Activated T-helper 1 cell treated with anti-CD3 and anti-CD28 coated beads, Interleukin-12 subunit alpha, Interleukin-12 subunit beta, Interleukin-2, Interleukin-4 antibody, amounts not matched to agents 30 ng/mL and 10 ng/mL and 1 ng/mL, durations not matched to agents 14 hours and 24 hours and 36 hours (primary cell): ENCODE measurements at regions of chr10 and their contacts with region 1.

Region 1: GRCh38 chr10:100286051-100287033 is at the start of gene BLOC1S2:
- DNase-seq: peak; percentile 91
- H3K4me3 Mint-ChIP-seq: peak within 1 kb of the TSS; percentile 99
- H3K27ac Mint-ChIP-seq: peak within 1 kb of the TSS; percentile 99
- H3K4me1 Mint-ChIP-seq: peaks cover 28% of the 10 kb centered on the region
- H3K27me3 Mint-ChIP-seq: peaks cover 3% of the 10 kb centered on the region
- total RNA-seq, gene BLOC1S2: 65.7 and 66.5 TPM in 2 replicates

Region 2: DNA sequence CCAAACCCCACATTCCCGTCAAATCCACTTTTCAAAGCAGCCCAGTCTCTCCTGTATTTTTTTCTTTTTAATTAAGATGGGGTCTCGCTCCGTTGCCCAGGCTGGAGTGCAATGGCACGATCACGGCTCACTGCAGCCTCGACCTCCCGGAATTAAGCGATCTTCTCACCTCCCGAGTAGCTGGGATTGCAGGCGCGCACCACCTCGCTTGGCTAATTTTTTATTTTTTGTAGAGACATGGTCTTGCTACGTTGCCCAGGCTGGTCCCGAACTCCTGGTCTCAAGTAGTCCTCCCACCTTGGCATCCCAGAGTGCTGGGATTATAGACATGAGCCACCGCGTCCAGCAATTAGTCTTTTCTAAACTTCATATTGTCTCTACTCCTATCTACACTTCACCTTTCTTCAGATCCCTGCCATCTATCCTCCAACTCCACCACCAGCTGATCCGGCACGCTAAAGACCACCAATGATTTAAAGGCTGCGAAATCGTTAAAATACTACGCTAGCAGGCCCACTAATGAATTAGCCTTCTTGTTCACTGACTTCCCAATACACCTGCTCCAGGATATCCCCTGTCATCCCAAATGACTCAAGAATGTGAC is 56.4 kb before region 1 on chr10:
- intact Hi-C with region 1: loop called (anchors 1 kb)
- DNase-seq: no peak
- H3K4me3 Mint-ChIP-seq: peak overlapping the region; percentile 97
- H3K27ac Mint-ChIP-seq: peak overlapping the region; percentile 82
- H3K4me1 Mint-ChIP-seq: peaks cover 34% of the 10 kb centered on the region
- H3K27me3 Mint-ChIP-seq: no peaks in the 10 kb centered on the region

Region 3: GRCh38 chr10:100327007-100327717 is 40.8 kb after region 1 on chr10:
- intact Hi-C with region 1: loop called (anchors 1 kb)
- DNase-seq: peak; percentile 49
- H3K4me3 Mint-ChIP-seq: no peak overlapping the region
- H3K27ac Mint-ChIP-seq: peak overlapping the region; percentile 79
- H3K4me1 Mint-ChIP-seq: peaks cover 13% of the 10 kb centered on the region
- H3K27me3 Mint-ChIP-seq: peaks cover 6% of the 10 kb centered on the region

Region 4: DNA sequence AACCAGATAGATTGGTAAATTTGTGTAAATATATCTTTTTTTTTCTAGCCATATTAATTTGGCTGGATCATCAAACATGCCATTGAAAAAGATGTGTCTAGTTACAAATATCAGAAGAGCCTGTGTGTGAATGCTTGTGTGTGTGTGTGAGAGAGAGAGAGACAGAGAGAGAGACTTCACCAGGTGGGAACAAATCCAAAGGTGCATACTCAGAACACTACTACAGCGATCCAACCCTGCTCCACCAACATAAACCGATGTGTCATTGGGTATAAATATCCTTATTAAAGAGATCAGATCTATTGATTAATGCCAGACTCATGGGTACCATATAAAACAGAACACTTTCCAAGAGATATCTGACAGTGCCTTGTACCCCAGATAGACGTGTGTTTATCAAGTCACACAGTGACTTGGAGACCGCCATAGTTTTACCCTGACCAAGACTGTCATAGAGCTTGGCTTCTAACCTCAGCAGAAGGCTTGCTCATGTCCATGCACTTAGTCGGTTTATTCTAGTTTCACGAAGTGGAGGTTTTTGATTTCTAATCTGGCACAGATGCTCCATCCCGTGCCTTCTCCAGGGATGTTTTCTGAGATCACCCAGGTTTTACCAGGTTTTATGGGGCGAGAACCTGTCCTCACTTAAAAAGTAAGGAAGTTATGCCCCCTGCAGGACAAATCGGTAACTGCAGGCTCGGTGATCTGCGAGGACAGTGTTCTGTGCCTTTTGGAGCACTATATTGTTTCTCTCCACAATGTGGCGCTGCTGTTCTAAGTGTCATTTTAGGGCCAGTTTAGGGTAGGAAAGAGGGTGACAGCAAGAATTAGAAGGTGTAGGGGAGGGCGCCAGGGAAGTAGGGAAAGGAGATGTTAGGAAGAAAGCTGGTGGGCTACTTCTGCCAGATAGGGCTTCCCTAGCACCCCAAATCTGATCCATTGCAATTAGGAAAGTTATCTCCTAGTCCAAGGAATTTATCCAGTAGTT is 147.2 kb after region 1 on chr10:
- intact Hi-C with region 1: loop called (anchors 1 kb)
- DNase-seq: peak; percentile 89
- H3K4me3 Mint-ChIP-seq: no peak overlapping the region
- H3K27ac Mint-ChIP-seq: no peak overlapping the region
- H3K4me1 Mint-ChIP-seq: peaks cover 17% of the 10 kb centered on the region
- H3K27me3 Mint-ChIP-seq: no peaks in the 10 kb centered on the region